Activated naive CD4-positive, alpha-beta T cell treated with anti-CD3 and anti-CD28 coated beads for 36 hours (primary cell): ENCODE measurements at regions of chr3 and their contacts with region 1.

Region 1: DNA sequence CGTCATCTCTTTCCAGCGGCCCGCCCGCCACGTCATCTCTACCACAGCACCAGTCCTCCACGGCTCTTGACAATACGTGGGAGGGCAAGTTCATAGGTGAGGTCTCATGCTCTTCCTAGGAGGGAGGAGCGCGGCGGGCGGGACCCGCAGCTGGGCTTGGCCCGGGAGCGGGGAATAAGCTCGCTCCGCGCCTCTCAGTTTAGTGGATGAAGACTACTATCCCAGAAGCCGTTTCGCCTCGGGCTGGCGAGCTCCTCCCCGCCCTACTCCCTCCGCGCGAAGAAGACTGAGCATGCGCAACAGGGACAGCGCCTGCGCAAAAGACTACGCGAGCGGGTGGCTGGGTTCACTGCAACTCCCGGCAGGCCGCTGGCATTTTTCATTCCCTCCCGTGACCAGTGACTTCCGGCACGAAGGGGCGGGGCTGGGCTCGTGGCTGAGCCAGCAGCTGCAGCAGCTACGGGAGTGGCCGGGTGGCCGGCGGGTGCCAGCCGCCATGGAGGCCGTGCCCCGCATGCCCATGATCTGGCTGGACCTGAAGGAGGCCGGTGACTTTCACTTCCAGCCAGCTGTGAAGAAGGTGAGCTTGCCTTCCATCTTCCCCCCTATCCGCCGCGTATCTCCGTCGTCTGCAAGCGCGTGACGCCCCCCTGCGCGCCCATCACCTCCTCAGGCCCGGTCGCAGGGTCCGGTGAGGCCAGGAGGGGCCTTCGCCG is at the start of gene PTPN23:
- DNase-seq: peak; percentile 99
- H3K4me3 Mint-ChIP-seq: peak within 1 kb of the TSS; percentile 100
- H3K27ac Mint-ChIP-seq: peak within 1 kb of the TSS; percentile 98
- H3K4me1 Mint-ChIP-seq: peaks cover 37% of the 10 kb centered on the region
- H3K27me3 Mint-ChIP-seq: no peaks in the 10 kb centered on the region
- total RNA-seq, gene PTPN23: 18.7 to 21.6 TPM

Region 2: DNA sequence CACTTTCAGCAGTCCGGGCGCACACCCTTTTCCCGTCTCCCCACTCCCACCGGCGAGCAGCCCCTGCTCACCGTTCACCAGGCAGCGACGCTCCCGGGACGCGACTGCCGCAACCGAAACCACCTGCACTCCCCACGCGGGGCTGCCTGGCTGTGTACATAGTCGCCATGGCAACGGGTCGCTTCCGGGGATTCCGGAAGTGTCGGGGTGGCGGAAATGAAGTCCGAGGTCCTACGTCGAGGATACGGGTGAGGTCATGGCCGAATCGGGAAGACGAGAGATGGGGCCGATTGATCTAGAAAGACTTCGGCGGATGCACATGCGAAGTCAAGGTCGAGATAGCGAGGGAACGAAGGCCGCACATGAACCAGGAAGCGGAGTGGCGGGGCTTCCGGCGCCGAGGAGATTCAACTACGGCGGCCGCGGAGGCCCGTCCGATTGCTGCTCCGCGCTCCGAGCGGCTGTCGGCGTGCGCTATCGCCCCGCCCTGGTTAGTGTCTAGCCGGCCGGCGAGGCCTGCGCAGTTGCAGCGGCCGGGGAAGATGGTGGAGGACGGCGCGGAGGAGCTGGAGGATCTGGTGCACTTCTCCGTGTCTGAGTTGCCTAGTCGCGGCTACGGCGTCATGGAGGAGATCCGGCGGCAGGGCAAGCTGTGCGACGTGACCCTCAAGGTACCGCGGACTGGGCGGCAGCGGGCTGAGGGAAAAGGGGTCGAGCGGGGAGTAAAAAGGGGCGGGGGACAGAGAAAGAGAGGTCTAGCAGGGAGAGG is 98.2 kb before region 1 on chr3 and contains the starts of genes KIF9 and KLHL18:
- CTCF ChIA-PET with region 1: no interaction called
- intact Hi-C with region 1: loop called (anchors 1 kb)
- DNase-seq: peak; percentile 95
- H3K4me3 Mint-ChIP-seq: peak within 1 kb of the TSS; percentile 99
- H3K27ac Mint-ChIP-seq: peak within 1 kb of the TSS; percentile 99
- H3K4me1 Mint-ChIP-seq: peaks cover 42% of the 10 kb centered on the region
- H3K27me3 Mint-ChIP-seq: no peaks in the 10 kb centered on the region
- total RNA-seq, gene KIF9: 4.5 to 4.9 TPM
- total RNA-seq, gene KLHL18: 20.7 to 21.6 TPM

Region 3: GRCh38 chr3:47802734-47803477 is 422.1 kb after region 1 on chr3 and contains the start of gene DHX30:
- CTCF ChIA-PET with region 1: no interaction called
- intact Hi-C with region 1: loop called (anchors 1 kb)
- DNase-seq: peak; percentile 87
- H3K4me3 Mint-ChIP-seq: peak within 1 kb of the TSS; percentile 96
- H3K27ac Mint-ChIP-seq: peak within 1 kb of the TSS; percentile 92
- H3K4me1 Mint-ChIP-seq: peaks cover 21% of the 10 kb centered on the region
- H3K27me3 Mint-ChIP-seq: no peaks in the 10 kb centered on the region
- total RNA-seq, gene DHX30: 65.6 to 69.9 TPM